ENCODE measurements at regions of chr4 and their contacts with region 1.

Region 1: DNA sequence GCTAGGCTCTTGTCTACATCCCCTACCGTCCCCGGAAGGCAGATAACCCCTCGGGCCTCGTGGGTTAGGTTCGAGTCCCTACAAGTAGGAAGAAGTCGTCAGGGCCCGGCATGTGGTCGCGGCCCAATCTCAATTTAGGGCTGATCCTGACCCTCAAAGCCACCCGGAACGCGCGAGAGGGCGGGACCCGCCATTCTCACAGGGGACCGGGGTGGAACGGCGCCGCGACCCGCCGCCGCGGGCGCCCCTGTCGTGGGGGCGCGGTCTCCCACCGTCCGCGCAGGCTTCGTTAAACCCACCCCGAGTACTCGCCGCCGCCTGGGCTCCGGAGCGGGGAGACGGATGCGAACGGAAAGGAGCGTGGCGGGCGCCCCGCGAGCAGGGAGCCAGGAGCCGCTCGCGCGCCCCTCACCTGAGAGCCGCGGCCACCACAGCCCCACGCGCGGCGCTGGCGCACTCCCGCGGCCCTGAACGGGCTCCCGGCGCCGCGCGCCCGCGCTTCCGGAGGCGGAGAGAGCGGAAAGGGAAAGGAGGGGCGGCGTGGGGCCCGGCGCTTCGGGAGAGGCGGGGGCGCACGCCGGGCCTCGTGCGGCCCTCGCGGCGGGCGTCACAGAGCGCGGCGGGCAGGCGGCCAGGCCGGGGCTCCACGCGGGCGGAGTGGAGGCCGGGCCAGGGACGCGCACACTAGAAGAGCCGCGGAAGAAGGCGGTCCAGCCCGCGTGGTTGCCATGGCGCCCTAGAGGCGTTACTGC is at the start of gene CFAP97:
- H3K4me3 Mint-ChIP-seq: peak within 1 kb of the TSS; percentile 84
- H3K27ac Mint-ChIP-seq: peak within 1 kb of the TSS; percentile 83
- H3K4me1 Mint-ChIP-seq: peaks cover 39% of the 10 kb centered on the region
- H3K27me3 Mint-ChIP-seq: peaks cover 22% of the 10 kb centered on the region

Region 2: GRCh38 chr4:184825896-184826690 is 377.6 kb before region 1 on chr4 and contains the start of gene ACSL1:
- intact Hi-C with region 1: no loop called
- H3K4me3 Mint-ChIP-seq: peak within 1 kb of the TSS; percentile 89
- H3K27ac Mint-ChIP-seq: peak within 1 kb of the TSS; percentile 87
- H3K4me1 Mint-ChIP-seq: peaks cover 51% of the 10 kb centered on the region
- H3K27me3 Mint-ChIP-seq: peaks cover 3% of the 10 kb centered on the region

Region 3: GRCh38 chr4:185219551-185220344 is 16.1 kb after region 1 on chr4:
- intact Hi-C with region 1: no loop called
- H3K4me3 Mint-ChIP-seq: no peak overlapping the region
- H3K27ac Mint-ChIP-seq: no peak overlapping the region
- H3K4me1 Mint-ChIP-seq: no peaks in the 10 kb centered on the region
- H3K27me3 Mint-ChIP-seq: peaks cover 20% of the 10 kb centered on the region

Region 4: GRCh38 chr4:185395956-185396723 is 192.5 kb after region 1 on chr4:
- intact Hi-C with region 1: loop called (anchors 10 kb)
- H3K4me3 Mint-ChIP-seq: peak overlapping the region; percentile 84
- H3K27ac Mint-ChIP-seq: peak overlapping the region; percentile 84
- H3K4me1 Mint-ChIP-seq: peaks cover 23% of the 10 kb centered on the region
- H3K27me3 Mint-ChIP-seq: peaks cover 7% of the 10 kb centered on the region

Region 5: DNA sequence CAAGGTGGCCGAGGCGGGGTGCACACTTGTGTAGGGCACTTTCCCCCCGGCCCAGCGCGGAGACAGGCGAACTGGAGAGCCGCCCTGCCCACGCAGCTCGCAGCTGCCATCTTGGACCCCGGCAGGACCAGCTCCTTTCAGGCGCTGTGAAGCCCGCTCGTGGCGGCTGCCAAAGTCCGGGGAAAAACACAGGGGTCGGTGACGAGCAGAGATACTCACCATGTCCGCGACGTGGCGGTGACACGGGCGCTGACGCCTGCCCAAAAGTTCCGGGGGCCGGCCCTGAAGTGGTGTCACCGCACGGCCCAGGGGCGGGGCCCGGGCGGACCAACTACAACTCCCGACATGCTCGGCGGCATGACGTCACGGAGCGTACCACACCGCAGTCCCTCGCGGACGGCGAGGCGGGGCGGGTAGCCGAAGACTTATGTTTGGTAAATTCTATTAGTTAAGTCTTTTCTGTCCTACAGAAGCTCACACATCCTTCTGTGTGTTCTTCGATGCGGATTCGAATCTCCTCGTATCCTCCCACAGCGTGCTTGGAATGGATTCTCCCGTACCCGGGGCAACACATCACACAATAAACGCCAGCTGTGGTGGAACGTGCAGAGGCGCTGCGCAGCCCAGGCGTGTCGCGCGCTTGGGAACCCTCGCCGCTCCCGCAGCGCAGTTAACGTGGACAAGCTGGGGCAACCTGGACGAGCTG is 222.1 kb after region 1 on chr4 and contains the start of gene UFSP2:
- intact Hi-C with region 1: loop called (anchors 10 kb)
- H3K4me3 Mint-ChIP-seq: peak within 1 kb of the TSS; percentile 79
- H3K27ac Mint-ChIP-seq: peak within 1 kb of the TSS; percentile 94
- H3K4me1 Mint-ChIP-seq: peaks cover 36% of the 10 kb centered on the region
- H3K27me3 Mint-ChIP-seq: peaks cover 28% of the 10 kb centered on the region

Region 6: DNA sequence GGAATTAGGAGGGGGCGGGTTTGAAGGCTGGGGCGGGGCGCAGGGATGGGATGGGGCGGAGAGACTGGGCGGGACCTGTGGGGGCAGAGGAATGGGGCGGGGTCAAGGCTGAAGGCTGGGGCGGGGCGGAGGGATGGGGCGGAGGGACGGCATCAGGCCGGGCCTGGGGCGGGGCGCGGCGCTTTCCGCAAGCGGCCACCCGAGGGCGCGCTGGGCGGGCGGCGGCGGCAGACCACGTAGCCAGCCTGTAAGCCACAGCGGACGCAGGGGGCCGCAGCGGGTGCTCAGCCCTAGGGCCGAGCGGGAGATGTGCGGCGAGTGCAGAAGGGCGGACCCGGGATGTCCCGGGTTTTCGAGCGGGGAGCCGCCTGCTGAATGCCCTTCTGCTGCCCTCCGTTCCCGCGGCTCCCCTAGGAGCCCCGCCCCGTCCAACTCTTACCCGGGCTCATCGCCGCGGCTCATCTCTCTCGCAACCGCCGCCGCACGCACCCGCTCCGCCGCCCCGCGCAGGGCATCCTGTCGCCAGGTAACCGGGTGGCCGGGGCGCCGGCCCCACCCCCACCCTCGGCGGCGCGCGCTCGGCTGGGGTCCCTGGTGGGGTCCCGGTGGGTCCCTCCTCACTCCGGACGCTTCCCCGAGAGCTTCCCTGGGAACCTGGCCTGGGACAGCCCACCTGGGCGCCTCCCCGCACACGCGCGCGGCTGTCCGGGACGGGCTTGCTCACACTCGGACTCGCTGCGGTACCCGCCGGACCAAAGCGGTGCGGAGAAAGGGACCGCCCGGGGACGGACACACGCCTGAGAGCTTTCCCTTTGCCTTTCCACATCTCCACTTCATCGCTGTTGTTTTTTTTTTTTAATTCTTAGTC is 267.8 kb after region 1 on chr4 and contains the start of gene CCDC110:
- intact Hi-C with region 1: loop called (anchors 5 kb)
- H3K4me3 Mint-ChIP-seq: peak within 1 kb of the TSS; percentile 73
- H3K27ac Mint-ChIP-seq: peak within 1 kb of the TSS; percentile 32
- H3K4me1 Mint-ChIP-seq: peaks cover 6% of the 10 kb centered on the region
- H3K27me3 Mint-ChIP-seq: peaks cover 59% of the 10 kb centered on the region

Region 7: DNA sequence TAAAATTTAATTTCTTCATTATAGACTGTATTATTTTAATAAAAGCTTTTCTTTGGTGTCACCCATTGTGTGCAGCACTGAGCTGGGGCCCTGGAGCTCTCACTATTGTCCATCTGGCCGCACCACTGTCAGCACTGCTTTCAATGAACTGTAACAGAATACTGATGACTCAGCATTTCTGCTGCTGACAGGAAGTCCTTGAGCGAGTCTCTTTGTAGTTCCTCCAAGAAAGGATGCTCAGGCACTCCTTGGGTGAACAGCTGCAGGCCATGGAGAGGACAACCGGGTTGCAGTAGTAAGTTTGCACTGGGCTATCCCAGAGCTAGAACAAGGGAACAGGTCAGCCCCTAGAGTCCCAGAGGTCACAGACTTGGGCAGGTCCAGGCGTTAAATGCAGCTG is 526.7 kb after region 1 on chr4:
- intact Hi-C with region 1: loop called (anchors 10 kb)
- H3K4me3 Mint-ChIP-seq: no peak overlapping the region
- H3K27ac Mint-ChIP-seq: no peak overlapping the region
- H3K4me1 Mint-ChIP-seq: peaks cover 53% of the 10 kb centered on the region
- H3K27me3 Mint-ChIP-seq: peaks cover 7% of the 10 kb centered on the region

Region 8: DNA sequence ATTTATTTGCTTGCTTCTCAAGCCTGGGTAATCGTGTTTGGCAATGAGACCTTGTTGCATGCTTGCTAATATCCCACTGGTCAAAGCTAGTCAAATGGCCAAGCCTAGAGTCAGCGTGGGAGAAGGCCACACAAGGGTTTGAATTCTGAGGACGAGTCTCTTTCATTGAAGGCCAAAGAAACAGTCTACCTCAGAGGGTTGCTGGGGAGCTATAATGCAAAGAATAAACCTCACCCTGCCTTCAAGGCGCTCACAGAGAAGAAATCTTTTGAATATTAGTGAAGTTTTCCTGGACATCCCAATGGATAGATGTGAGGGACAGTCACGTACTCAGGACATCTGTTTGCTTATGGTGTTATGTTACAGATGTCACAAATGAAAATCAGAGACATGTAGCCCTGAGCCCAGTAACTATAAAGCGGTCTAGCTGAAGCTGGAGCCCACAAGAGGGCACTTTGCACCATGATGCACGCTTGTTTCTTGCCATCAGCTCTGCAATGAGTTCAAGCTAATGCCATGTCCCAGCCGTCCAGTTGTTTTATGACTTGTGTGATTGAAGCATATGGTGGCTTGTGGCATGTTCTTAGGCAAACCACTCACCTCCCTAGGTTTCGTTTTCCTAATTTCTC is 864.2 kb after region 1 on chr4:
- intact Hi-C with region 1: loop called (anchors 10 kb)
- H3K4me3 Mint-ChIP-seq: no peak overlapping the region
- H3K27ac Mint-ChIP-seq: no peak overlapping the region
- H3K4me1 Mint-ChIP-seq: peaks cover 10% of the 10 kb centered on the region
- H3K27me3 Mint-ChIP-seq: peaks cover 10% of the 10 kb centered on the region